Mammary epithelial cell (primary cell): ENCODE measurements at regions of chr19 and their contacts with region 1.

Region 1: GRCh38 chr19:1592755-1593500 is at the start of gene MBD3:
- DNase-seq: peak; percentile 91
- H3K4me3 ChIP-seq: peak within 1 kb of the TSS; percentile 77 to 96 (median 85)
- H3K27ac ChIP-seq: peak within 1 kb of the TSS; percentile 82
- H3K4me1 ChIP-seq: peaks cover 30% of the 10 kb centered on the region
- H3K27me3 ChIP-seq: no peaks in the 10 kb centered on the region
- CTCF ChIP-seq: no peak
- total RNA-seq, gene MBD3: 58.5 to 84.3 TPM

Region 2: GRCh38 chr19:1538978-1539377 is 54.0 kb before region 1 on chr19:
- CTCF ChIA-PET with region 1: no interaction called
- dilution Hi-C with region 1: no loop called
- in situ Hi-C with region 1: no loop called
- intact Hi-C with region 1: no loop called
- DNase-seq: no peak
- H3K4me3 ChIP-seq: no peak overlapping the region
- H3K27ac ChIP-seq: no peak overlapping the region
- H3K4me1 ChIP-seq: no peaks in the 10 kb centered on the region
- H3K27me3 ChIP-seq: no peaks in the 10 kb centered on the region
- CTCF ChIP-seq: no peak

Region 3: DNA sequence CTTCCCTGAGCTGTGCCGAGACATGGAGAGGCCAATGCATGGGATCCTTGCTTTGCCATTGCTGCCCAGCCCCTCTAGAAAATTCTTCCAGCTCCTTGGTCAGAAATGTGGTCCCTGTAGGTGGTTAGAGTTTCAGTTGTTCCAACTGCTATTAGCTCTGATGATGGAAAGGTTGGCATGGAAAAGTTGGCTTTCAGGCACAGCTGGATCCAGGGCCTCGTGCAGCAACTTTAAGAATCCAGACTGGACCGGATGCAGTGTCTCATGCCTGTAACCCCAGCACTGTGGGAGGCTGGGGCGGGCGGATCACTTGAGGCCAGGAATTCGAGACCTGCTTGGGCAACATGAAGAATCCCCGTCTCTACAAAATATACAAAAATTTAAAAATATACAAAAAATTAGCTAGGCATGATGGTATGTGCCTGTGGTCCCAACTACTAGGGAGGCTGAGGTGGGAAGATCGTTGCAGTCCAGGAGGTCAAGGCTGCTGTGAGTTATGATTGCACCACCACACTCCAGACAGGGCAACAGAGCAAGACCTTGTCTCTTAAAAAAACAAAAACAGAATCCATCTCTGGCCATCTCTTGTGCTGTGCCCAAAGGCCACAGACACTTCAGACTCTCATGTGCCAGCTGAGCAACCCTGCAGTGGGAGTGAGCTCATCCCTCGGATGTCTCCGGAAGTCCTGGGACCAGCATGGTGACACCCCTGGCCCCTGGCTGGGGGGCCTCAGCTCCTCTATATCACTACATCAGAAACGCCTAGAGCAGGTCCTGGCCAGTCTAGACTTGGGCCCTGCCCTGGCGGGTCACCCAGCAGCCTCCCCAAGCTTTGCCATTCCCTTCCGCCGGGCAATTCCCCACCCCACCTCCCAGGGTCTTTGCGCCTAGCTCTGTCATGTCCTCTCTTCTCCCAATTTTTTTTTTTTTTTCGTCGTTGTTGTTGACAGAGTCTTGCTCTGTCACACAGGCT is 41.6 kb before region 1 on chr19:
- CTCF ChIA-PET with region 1: interaction called, 12 read pairs
- dilution Hi-C with region 1: no loop called
- in situ Hi-C with region 1: no loop called
- intact Hi-C with region 1: no loop called
- DNase-seq: no peak
- H3K4me3 ChIP-seq: no peak overlapping the region
- H3K27ac ChIP-seq: no peak overlapping the region
- H3K4me1 ChIP-seq: no peaks in the 10 kb centered on the region
- H3K27me3 ChIP-seq: no peaks in the 10 kb centered on the region
- CTCF ChIP-seq: no peak

Region 4: GRCh38 chr19:1566513-1567115 is 26.3 kb before region 1 on chr19:
- CTCF ChIA-PET with region 1: no interaction called
- dilution Hi-C with region 1: no loop called
- in situ Hi-C with region 1: no loop called
- intact Hi-C with region 1: loop called (anchors 2 kb)
- DNase-seq: peak; percentile 77
- H3K4me3 ChIP-seq: peak overlapping the region; percentile 75 to 91 (median 84)
- H3K27ac ChIP-seq: peak overlapping the region; percentile 60
- H3K4me1 ChIP-seq: peaks cover 13% of the 10 kb centered on the region
- H3K27me3 ChIP-seq: no peaks in the 10 kb centered on the region
- CTCF ChIP-seq: no peak